H1 (cell line): ENCODE measurements at regions of chr11 and their contacts with region 1.

Region 1: DNA sequence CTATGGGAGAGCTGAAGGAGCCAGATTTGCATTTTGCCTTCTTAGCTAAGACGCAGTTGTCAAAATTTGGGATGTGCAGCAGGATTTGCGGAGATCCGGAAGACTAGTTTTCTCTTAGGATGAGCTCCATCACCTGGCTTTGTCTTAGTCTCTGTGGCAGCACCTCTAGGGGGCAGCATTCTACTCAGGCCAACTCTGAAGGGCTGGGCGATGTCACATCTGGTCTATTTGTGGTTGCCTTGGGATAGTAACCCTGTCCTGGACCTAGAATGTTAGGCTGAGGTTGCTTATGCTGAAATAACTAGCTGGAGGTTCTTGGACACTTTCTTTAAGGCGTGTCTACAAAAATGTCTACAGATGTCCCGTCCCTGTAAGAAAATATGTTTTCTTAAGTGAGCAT is 116.2 kb downstream of the FAT3 start:
- DNase-seq: peak in 1 of 2 experiments; percentile 78
- H3K4me3 ChIP-seq: no peak overlapping the region
- H3K27ac ChIP-seq: no peak overlapping the region
- H3K4me1 ChIP-seq: no peaks in the 10 kb centered on the region
- H3K27me3 ChIP-seq: no peaks in the 10 kb centered on the region
- CTCF ChIP-seq: peak; percentile 66 to 86 (median 70)
- EP300 ChIP-seq: no peak
- POLR2A ChIP-seq: no peak
- RAD21 ChIP-seq: peak; percentile 68 to 78

Region 2: GRCh38 chr11:92272651-92273050 is 68.2 kb before region 1 on chr11:
- CTCF ChIA-PET with region 1: no interaction called
- POLR2A ChIA-PET with region 1: no interaction called
- DNase-seq: no peak
- H3K4me3 ChIP-seq: no peak overlapping the region
- H3K27ac ChIP-seq: no peak overlapping the region
- H3K4me1 ChIP-seq: peaks cover 2 to 8% (median 5%) of the 10 kb centered on the region in 4 experiments; a peak in 5 of 7 replicates
- H3K27me3 ChIP-seq: no peaks in the 10 kb centered on the region
- CTCF ChIP-seq: no peak
- EP300 ChIP-seq: no peak
- POLR2A ChIP-seq: no peak
- RAD21 ChIP-seq: no peak

Region 3: DNA sequence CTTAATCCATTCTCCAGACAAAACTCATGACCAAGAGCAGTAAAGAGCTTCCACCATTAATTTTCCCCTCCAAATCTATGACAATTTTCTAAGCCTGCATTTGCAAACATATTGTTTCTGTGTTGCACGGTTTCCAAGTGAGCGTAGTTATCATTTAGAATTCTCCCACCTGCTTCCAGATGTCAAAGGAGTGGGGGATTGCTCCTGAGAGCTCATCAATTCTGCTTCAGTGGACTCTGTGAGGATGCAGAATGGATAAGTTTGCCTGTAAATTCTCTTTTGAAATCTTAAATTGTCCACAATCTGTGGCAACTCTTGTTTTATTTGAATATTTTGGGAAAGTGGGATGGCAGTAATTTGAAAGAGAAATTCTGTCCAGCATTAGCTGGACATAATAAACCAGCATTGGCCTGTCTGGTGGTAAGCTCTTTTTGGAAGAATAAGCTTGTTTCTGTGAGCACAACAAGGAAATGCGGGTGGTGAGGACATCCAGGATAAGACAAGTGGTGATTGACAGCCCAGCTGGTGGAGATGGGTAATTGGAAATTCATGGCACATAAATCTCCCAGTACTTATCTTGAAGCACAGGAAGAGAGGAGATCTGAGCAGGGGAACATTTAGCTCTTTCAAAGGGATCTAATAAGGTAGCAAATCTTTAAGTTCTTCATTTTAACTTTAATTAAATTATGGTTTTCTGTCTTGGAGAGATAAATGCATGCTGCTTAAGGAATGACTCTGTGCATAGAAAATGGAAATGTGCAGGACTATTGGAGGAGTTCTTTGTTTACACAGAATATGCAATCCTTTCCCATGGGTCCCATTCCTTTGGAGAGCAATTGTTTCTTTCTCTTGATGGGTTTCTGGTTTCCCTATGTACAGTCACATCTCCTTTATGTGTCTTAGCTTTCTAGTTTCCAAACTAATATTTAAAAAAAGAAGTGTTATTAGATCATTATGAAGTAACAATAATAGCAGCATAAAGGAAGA is 43.0 kb before region 1 on chr11:
- CTCF ChIA-PET with region 1: interaction called, 16 read pairs
- POLR2A ChIA-PET with region 1: no interaction called
- DNase-seq: no peak
- H3K4me3 ChIP-seq: no peak overlapping the region
- H3K27ac ChIP-seq: no peak overlapping the region
- H3K4me1 ChIP-seq: peaks cover 0 to 3% (median 0%) of the 10 kb centered on the region in 4 experiments; a peak in 1 of 7 replicates
- H3K27me3 ChIP-seq: no peaks in the 10 kb centered on the region
- CTCF ChIP-seq: no peak
- EP300 ChIP-seq: no peak
- POLR2A ChIP-seq: no peak
- RAD21 ChIP-seq: no peak

Region 4: DNA sequence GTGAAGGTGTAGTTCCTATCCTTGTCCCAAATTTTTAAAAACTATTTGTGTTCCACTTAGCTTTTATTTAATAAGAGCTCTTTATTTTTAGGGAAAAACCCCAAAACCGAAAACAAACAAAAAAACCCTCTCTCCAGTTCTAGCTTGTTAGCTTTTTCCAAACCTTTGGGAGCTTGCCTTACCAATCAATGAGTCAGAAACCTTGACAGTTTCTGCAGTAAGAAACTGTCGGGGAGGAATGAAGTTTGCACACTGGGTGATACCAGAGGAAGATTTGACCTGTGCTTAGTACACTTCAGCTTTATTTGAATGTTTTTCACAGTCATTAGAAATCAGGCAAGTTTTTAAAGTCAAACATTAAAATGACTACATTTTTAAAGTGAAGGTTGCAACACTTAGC is 11.2 kb before region 1 on chr11:
- CTCF ChIA-PET with region 1: interaction called, 55 read pairs
- POLR2A ChIA-PET with region 1: interaction called, 3 read pairs
- DNase-seq: no peak
- H3K4me3 ChIP-seq: no peak overlapping the region
- H3K27ac ChIP-seq: peak overlapping the region; percentile 21; the same call in 1 of the 2 replicates
- H3K4me1 ChIP-seq: peaks cover 2 to 12% (median 8%) of the 10 kb centered on the region in 4 experiments; a peak in 5 of 7 replicates
- H3K27me3 ChIP-seq: no peaks in the 10 kb centered on the region
- CTCF ChIP-seq: no peak
- EP300 ChIP-seq: no peak
- POLR2A ChIP-seq: no peak
- RAD21 ChIP-seq: no peak

Region 5: GRCh38 chr11:92362989-92363388 is 22.1 kb after region 1 on chr11:
- CTCF ChIA-PET with region 1: interaction called, 21 read pairs
- POLR2A ChIA-PET with region 1: no interaction called
- DNase-seq: no peak
- H3K4me3 ChIP-seq: no peak overlapping the region
- H3K27ac ChIP-seq: no peak overlapping the region
- H3K4me1 ChIP-seq: 0 out of 7 replicates have a peak, but pooled peaks cover 0 to 2% (median 0%) of the 10 kb centered on the region in 4 experiments
- H3K27me3 ChIP-seq: no peaks in the 10 kb centered on the region
- CTCF ChIP-seq: no peak
- EP300 ChIP-seq: no peak
- POLR2A ChIP-seq: no peak
- RAD21 ChIP-seq: no peak

Region 6: GRCh38 chr11:92383430-92383829 is 42.6 kb after region 1 on chr11:
- CTCF ChIA-PET with region 1: interaction called, 35 read pairs
- POLR2A ChIA-PET with region 1: no interaction called
- DNase-seq: no peak
- H3K4me3 ChIP-seq: no peak overlapping the region
- H3K27ac ChIP-seq: no peak overlapping the region
- H3K4me1 ChIP-seq: peaks cover 0 to 5% (median 0%) of the 10 kb centered on the region in 4 experiments; a peak in 4 of 7 replicates
- H3K27me3 ChIP-seq: no peaks in the 10 kb centered on the region
- CTCF ChIP-seq: no peak
- EP300 ChIP-seq: no peak
- POLR2A ChIP-seq: no peak
- RAD21 ChIP-seq: no peak